Gastrocnemius medialis (tissue), 4 donors: ENCODE measurements at regions of chr16 and their contacts with region 1.

Region 1: GRCh38 chr16:31202414-31203375 is at the start of gene PYCARD:
- DNase-seq: no peak
- ATAC-seq: peak; percentile 22 to 43
- H3K4me3 ChIP-seq: peak within 1 kb of the TSS; percentile 59 to 77 (median 62)
- H3K27ac ChIP-seq: peak within 1 kb of the TSS; percentile 42 to 67 (median 53)
- H3K4me1 ChIP-seq: peaks cover 9 to 16% of the 10 kb centered on the region in 2 donors
- H3K27me3 ChIP-seq: no peaks in the 10 kb centered on the region
- CTCF ChIP-seq: no peak
- POLR2A ChIP-seq: no peak
- total RNA-seq, gene PYCARD: 1.3 to 16.4 (median 3.7) TPM

Region 2: GRCh38 chr16:31404353-31405064 is 201.8 kb after region 1 on chr16:
- in situ Hi-C with region 1: loop called in 1 of 4 experiments (anchors 25 kb)
- intact Hi-C with region 1: no loop called
- DNase-seq: no peak
- ATAC-seq: no peak
- H3K4me3 ChIP-seq: peak overlapping the region in 1 of 4 donors; percentile 13
- H3K27ac ChIP-seq: no peak overlapping the region
- H3K4me1 ChIP-seq: no peaks in the 10 kb centered on the region
- H3K27me3 ChIP-seq: no peaks in the 10 kb centered on the region
- CTCF ChIP-seq: no peak
- POLR2A ChIP-seq: no peak